Activated CD4-positive, alpha-beta memory T cell treated with anti-CD3 and anti-CD28 coated beads for 36 hours (primary cell): ENCODE measurements at regions of chr4 and their contacts with region 1.

Region 1: GRCh38 chr4:186201535-186202230 is 10.3 kb downstream of the CYP4V2 start:
- DNase-seq: peak; percentile 83
- H3K4me3 Mint-ChIP-seq: peak overlapping the region; percentile 21
- H3K27ac Mint-ChIP-seq: peak overlapping the region; percentile 26
- H3K4me1 Mint-ChIP-seq: peaks cover 27% of the 10 kb centered on the region
- H3K27me3 Mint-ChIP-seq: no peaks in the 10 kb centered on the region

Region 2: GRCh38 chr4:185425647-185426352 is 775.9 kb before region 1 on chr4 and contains the start of gene UFSP2:
- CTCF ChIA-PET with region 1: interaction called, 3 read pairs
- POLR2A ChIA-PET with region 1: no interaction called
- intact Hi-C with region 1: loop called (anchors 5 kb)
- DNase-seq: peak; percentile 90
- H3K4me3 Mint-ChIP-seq: peak within 1 kb of the TSS; percentile 83
- H3K27ac Mint-ChIP-seq: peak within 1 kb of the TSS; percentile 97
- H3K4me1 Mint-ChIP-seq: peaks cover 23% of the 10 kb centered on the region
- H3K27me3 Mint-ChIP-seq: no peaks in the 10 kb centered on the region
- total RNA-seq, gene UFSP2: 28.3 to 33.0 TPM

Region 3: GRCh38 chr4:186037692-186038658 is 163.7 kb before region 1 on chr4:
- CTCF ChIA-PET with region 1: no interaction called
- POLR2A ChIA-PET with region 1: no interaction called
- intact Hi-C with region 1: no loop called
- DNase-seq: peak; percentile 13
- H3K4me3 Mint-ChIP-seq: no peak overlapping the region
- H3K27ac Mint-ChIP-seq: no peak overlapping the region
- H3K4me1 Mint-ChIP-seq: no peaks in the 10 kb centered on the region
- H3K27me3 Mint-ChIP-seq: peaks cover 17% of the 10 kb centered on the region

Region 4: DNA sequence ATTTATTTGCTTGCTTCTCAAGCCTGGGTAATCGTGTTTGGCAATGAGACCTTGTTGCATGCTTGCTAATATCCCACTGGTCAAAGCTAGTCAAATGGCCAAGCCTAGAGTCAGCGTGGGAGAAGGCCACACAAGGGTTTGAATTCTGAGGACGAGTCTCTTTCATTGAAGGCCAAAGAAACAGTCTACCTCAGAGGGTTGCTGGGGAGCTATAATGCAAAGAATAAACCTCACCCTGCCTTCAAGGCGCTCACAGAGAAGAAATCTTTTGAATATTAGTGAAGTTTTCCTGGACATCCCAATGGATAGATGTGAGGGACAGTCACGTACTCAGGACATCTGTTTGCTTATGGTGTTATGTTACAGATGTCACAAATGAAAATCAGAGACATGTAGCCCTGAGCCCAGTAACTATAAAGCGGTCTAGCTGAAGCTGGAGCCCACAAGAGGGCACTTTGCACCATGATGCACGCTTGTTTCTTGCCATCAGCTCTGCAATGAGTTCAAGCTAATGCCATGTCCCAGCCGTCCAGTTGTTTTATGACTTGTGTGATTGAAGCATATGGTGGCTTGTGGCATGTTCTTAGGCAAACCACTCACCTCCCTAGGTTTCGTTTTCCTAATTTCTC is 133.8 kb before region 1 on chr4:
- CTCF ChIA-PET with region 1: interaction called, 6 read pairs
- POLR2A ChIA-PET with region 1: no interaction called
- intact Hi-C with region 1: loop called (anchors 1 kb)
- DNase-seq: peak; percentile 58
- H3K4me3 Mint-ChIP-seq: no peak overlapping the region
- H3K27ac Mint-ChIP-seq: no peak overlapping the region
- H3K4me1 Mint-ChIP-seq: peaks cover 15% of the 10 kb centered on the region
- H3K27me3 Mint-ChIP-seq: peaks cover 6% of the 10 kb centered on the region

Region 5: DNA sequence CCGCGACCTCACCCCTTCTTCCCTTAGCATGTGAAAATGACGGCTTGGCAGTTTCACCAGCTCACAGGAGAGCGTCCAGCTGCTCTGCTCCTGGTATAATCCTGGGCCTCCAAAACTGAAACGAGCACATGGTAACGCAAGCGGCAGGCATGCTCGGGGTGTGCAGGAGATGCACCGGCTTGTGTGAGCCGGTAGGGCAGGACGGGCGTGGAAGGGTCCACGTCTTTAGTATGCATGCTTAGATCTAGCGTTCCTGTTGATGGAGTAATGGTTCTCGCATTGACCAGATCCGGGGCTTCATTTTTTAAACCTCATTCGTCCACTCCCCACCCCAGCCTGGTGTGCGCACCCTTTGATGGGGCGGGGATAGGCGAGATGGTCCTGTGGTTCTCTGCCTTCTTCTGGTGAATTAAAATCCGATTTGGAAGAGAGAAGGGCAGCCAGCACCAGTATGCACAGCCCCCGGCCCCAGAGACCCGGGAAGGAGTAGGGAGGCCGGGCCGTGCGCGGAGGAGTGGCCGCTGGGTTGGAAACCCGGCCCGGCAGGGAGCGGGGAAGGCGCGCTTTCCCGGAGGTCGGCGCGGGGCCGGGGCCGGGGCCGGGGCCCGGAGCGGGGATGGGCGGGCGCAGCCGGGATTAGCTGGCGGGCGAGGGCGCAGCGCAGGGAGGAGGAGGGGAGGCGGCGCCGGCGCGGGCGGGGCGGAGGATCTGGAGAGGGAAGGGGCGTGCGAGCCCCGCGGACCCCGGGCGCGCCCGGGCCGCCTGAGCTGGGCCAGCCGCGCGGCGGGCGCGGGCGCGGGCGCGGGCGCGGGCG is 57.3 kb before region 1 on chr4:
- CTCF ChIA-PET with region 1: no interaction called
- POLR2A ChIA-PET with region 1: no interaction called
- intact Hi-C with region 1: loop called (anchors 2 kb)
- DNase-seq: peak; percentile 25
- H3K4me3 Mint-ChIP-seq: peak overlapping the region; percentile 71
- H3K27ac Mint-ChIP-seq: no peak overlapping the region
- H3K4me1 Mint-ChIP-seq: peaks cover 9% of the 10 kb centered on the region
- H3K27me3 Mint-ChIP-seq: peaks cover 39% of the 10 kb centered on the region

Region 6: DNA sequence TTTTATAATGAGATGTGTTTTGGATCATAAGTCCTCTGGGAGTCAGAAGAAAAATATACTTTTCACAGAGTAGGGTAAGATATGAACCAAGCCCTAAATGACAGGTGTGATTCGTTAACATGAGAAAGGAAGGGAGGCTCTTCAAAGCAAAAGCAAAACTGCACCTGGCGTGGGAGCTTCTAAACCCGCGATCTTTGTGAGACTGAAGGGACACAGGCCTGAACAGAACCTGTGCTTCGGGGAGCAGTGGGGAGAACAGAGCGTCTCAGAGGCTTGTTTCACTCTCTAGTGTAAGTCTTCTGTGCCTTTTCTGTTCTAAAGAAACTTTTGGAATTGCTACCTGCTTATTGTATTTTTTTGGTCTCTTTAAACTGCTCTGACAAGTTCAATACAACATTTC is 40.5 kb before region 1 on chr4:
- CTCF ChIA-PET with region 1: interaction called, 10 read pairs
- POLR2A ChIA-PET with region 1: no interaction called
- intact Hi-C with region 1: no loop called
- DNase-seq: peak; percentile 60
- H3K4me3 Mint-ChIP-seq: peak overlapping the region; percentile 40
- H3K27ac Mint-ChIP-seq: no peak overlapping the region
- H3K4me1 Mint-ChIP-seq: peaks cover 5% of the 10 kb centered on the region
- H3K27me3 Mint-ChIP-seq: no peaks in the 10 kb centered on the region

Region 7: GRCh38 chr4:186191200-186192065 is 10.2 kb before region 1 on chr4 and contains the start of gene CYP4V2:
- CTCF ChIA-PET with region 1: interaction called, 42 read pairs
- POLR2A ChIA-PET with region 1: interaction called, 15 read pairs
- intact Hi-C with region 1: loop called (anchors 1 kb)
- DNase-seq: peak; percentile 90
- H3K4me3 Mint-ChIP-seq: peak within 1 kb of the TSS; percentile 93
- H3K27ac Mint-ChIP-seq: peak within 1 kb of the TSS; percentile 92
- H3K4me1 Mint-ChIP-seq: peaks cover 34% of the 10 kb centered on the region
- H3K27me3 Mint-ChIP-seq: no peaks in the 10 kb centered on the region
- total RNA-seq, gene CYP4V2: 4.9 to 5.2 TPM